HEK293 (cell line): ENCODE measurements at regions of chr18 and their contacts with region 1.

Region 1: DNA sequence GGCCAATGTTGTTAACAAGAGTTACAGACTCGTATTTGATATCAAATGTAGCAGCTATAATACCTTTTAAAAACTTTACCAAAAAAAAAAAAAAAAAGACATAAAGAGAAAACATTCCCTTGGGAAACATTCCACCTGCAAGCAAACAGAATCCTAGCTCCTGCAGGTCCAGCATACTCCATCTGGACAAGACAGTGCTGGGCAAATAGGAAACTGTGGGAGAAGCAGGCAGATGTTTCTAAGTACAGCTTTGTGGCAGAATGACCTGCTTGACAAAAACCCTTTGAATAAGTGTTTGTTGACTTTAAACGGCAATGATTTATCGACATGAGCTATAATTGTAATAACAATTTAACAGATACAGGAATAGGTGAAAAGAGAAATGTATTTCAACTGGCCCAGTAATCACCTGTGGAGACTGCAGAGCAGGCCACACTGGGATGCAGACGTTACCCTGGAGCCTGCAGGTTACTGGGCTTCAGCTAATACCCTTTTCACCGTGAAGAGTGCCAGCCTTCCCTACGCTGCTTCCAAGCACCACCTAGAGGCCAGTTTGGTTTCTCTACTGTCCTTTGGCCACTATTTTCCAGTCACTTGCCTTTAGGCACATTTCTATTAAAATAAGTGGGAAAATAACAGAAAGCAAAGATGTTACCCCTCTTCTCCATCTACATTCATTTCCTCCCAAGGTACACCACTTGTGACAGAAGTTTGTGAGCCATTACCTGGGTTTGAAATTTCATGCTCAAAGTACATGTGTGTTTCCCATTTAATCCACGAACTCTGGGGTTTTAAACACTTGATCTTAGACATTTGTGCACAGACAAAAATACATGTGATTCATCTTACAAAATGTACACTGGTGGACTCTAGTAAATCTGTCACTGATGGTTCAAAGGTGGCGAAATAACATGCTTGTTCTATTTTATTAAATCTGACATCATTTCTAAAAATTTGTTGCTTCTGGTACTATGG is 96.9 kb upstream of the ZNF397 start:
- H3K4me3 ChIP-seq: no peak overlapping the region
- H3K27ac ChIP-seq: no peak overlapping the region
- H3K4me1 ChIP-seq: no peaks in the 10 kb centered on the region
- CTCF ChIP-seq: peak; percentile 50; the same call in 1 of the 2 replicates

Region 2: GRCh38 chr18:35005963-35006577 is 137.8 kb before region 1 on chr18:
- CTCF ChIA-PET with region 1: interaction called, 104 read pairs
- POLR2A ChIA-PET with region 1: no interaction called
- H3K4me3 ChIP-seq: no peak overlapping the region
- H3K27ac ChIP-seq: no peak overlapping the region
- H3K4me1 ChIP-seq: no peaks in the 10 kb centered on the region
- CTCF ChIP-seq: peak; percentile 50

Region 3: DNA sequence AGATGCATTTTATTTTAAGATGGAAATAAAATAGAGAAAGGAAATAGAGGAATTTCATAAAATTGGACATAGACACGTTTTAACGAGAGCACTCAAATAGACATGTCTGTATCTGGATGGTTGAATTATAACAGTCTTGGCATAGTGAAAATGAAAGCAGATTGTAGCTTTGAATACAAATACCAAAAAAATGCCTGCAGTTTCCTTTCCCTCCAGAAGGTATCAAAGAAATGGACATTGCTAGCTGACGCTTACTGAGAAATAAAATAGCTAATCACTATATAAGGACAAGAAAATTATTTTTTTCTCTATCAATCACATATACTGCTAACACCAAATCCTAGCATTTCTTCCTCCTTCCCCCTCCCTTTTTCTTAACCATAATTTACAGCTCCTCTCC is 114.1 kb before region 1 on chr18:
- CTCF ChIA-PET with region 1: interaction called, 37 read pairs
- POLR2A ChIA-PET with region 1: no interaction called
- H3K4me3 ChIP-seq: no peak overlapping the region
- H3K27ac ChIP-seq: no peak overlapping the region
- H3K4me1 ChIP-seq: no peaks in the 10 kb centered on the region
- CTCF ChIP-seq: no peak

Region 4: DNA sequence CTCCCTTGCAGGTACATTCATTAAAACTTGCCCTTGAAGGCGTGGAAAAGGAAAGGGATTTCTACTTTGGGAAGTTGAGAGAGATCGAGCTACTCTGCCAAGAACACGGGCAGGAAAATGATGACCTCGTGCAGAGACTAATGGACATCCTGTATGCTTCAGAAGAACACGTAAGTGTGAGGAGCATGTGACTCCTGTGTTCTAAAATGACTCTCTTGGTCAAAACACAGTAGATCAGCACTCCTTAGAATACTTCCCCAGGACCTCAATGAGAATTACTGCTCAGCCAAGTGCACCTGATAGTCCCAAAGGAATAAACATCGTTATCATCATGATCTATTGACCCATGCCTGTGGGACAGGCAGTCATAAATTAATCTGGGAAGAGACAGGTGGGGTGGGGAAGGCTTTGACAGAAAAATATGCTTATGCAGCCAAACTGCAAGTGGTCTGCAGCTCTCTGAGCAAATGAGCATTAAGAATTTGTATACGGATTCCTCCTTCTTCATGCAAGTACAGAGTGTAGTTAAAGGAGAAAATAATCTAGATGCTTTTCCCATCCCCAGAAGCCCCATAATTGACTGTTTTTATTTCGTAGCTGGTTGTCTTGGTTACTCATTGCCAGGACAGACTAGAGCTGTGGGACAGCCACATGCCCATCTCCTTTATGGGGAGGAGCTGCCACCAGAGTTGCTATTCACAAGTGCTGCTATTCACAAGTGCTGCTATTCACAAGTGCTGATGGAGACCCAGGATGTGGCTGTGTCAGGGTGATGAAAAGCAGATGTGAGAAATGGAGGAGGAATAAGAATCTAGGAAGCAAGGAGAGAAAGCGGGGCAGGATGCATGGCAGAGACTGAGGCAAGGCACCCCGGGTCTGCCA is 11.6 kb before region 1 on chr18:
- CTCF ChIA-PET with region 1: interaction called, 16 read pairs
- POLR2A ChIA-PET with region 1: no interaction called
- H3K4me3 ChIP-seq: no peak overlapping the region
- H3K27ac ChIP-seq: no peak overlapping the region
- H3K4me1 ChIP-seq: no peaks in the 10 kb centered on the region
- CTCF ChIP-seq: no peak